PC-3 (cell line): ENCODE measurements at regions of chr7 and their contacts with region 1.

Region 1: GRCh38 chr7:140593672-140593982 is 47.0 kb downstream of the DENND2A start:
- DNase-seq: no peak
- ATAC-seq: no peak
- H3K4me3 ChIP-seq: no peak overlapping the region
- H3K27ac ChIP-seq: no peak overlapping the region
- H3K4me1 ChIP-seq: peaks cover 34% of the 10 kb centered on the region
- H3K27me3 ChIP-seq: no peaks in the 10 kb centered on the region
- CTCF ChIP-seq: no peak

Region 2: GRCh38 chr7:140607441-140607989 is 13.9 kb after region 1 on chr7:
- CTCF ChIA-PET with region 1: interaction called, 3 read pairs
- POLR2A ChIA-PET with region 1: no interaction called
- intact Hi-C with region 1: loop called (anchors 1 kb)
- DNase-seq: peak; percentile 80
- ATAC-seq: peak; percentile 52
- H3K4me3 ChIP-seq: no peak overlapping the region
- H3K27ac ChIP-seq: peak overlapping the region; percentile 96
- H3K4me1 ChIP-seq: peaks cover 69% of the 10 kb centered on the region
- H3K27me3 ChIP-seq: no peaks in the 10 kb centered on the region
- CTCF ChIP-seq: no peak

Region 3: GRCh38 chr7:140625908-140626868 is 32.6 kb after region 1 on chr7:
- CTCF ChIA-PET with region 1: no interaction called
- POLR2A ChIA-PET with region 1: no interaction called
- intact Hi-C with region 1: loop called (anchors 5 kb)
- DNase-seq: peak; percentile 94
- ATAC-seq: peak; percentile 91
- H3K4me3 ChIP-seq: no peak overlapping the region
- H3K27ac ChIP-seq: peak overlapping the region; percentile 79
- H3K4me1 ChIP-seq: peaks cover 44% of the 10 kb centered on the region
- H3K27me3 ChIP-seq: no peaks in the 10 kb centered on the region
- CTCF ChIP-seq: no peak